A549 (cell line): ENCODE measurements at regions of chr9 and their contacts with region 1.

Region 1: GRCh38 chr9:112898872-112899311 is 8.2 kb upstream of the SLC46A2 start:
- DNase-seq: no peak
- ATAC-seq: no peak
- H3K4me3 ChIP-seq: no peak overlapping the region
- H3K27ac ChIP-seq: no peak overlapping the region
- H3K4me1 ChIP-seq: no peaks in the 10 kb centered on the region
- CTCF ChIP-seq: no peak
- EP300 ChIP-seq: no peak
- POLR2A ChIP-seq: no peak
- RAD21 ChIP-seq: no peak

Region 2: GRCh38 chr9:112844771-112845542 is 53.9 kb before region 1 on chr9:
- CTCF ChIA-PET with region 1: interaction called, 24 read pairs
- POLR2A ChIA-PET with region 1: no interaction called
- DNase-seq: peak; percentile 70 to 74
- ATAC-seq: peak; percentile 74 to 89
- H3K4me3 ChIP-seq: no peak overlapping the region
- H3K27ac ChIP-seq: no peak overlapping the region
- H3K4me1 ChIP-seq: no peaks in the 10 kb centered on the region
- CTCF ChIP-seq: peak; percentile 85
- EP300 ChIP-seq: no peak
- POLR2A ChIP-seq: no peak
- RAD21 ChIP-seq: peak; percentile 63 to 79

Region 3: DNA sequence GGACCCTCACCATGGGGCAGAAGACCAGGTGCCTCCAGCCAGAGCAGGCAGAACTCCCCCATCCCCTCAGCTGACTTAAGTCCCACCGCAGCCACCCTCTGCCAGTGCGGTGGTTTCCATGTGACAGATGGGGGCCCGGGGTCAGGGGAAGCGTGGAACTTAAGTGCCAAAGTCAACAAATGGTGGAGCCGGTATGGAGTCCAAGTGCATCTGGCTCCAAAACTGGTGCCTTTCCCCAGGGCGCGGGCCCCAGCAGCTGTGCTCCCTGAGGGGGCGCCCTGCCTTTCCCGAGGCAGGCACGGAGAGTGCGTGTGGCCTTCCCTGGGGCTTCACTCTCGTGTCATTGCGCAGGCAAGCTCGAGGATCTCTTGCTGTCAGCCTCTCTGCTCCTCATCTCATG is 42.1 kb before region 1 on chr9:
- CTCF ChIA-PET with region 1: interaction called, 11 read pairs
- POLR2A ChIA-PET with region 1: no interaction called
- DNase-seq: no peak
- ATAC-seq: no peak
- H3K4me3 ChIP-seq: no peak overlapping the region
- H3K27ac ChIP-seq: no peak overlapping the region
- H3K4me1 ChIP-seq: no peaks in the 10 kb centered on the region
- CTCF ChIP-seq: no peak
- EP300 ChIP-seq: no peak
- POLR2A ChIP-seq: no peak
- RAD21 ChIP-seq: no peak

Region 4: GRCh38 chr9:112913326-112913725 is 14.4 kb after region 1 on chr9:
- CTCF ChIA-PET with region 1: interaction called, 15 read pairs
- POLR2A ChIA-PET with region 1: no interaction called
- DNase-seq: no peak
- ATAC-seq: no peak
- H3K4me3 ChIP-seq: no peak overlapping the region
- H3K27ac ChIP-seq: no peak overlapping the region
- H3K4me1 ChIP-seq: no peaks in the 10 kb centered on the region
- CTCF ChIP-seq: no peak
- EP300 ChIP-seq: no peak
- POLR2A ChIP-seq: no peak
- RAD21 ChIP-seq: no peak

Region 5: DNA sequence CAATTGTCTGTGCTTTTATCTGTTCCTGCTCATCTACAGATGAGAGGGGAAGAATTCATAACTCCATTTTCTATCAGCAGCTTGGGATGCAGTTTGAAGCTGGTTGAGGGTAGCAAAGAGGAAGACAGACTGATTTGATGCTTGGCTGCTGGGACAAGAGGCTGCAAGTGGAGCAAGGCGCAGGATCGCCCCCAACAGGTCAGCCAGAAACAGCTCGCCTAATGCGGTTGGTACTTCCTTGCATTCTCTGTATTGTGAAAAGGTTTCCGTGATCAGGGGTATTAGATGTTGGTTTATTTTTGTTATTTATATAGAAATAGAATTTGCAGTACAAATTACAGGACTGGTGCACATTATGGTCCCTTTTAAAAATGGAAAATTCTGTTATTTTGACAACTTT is 72.5 kb after region 1 on chr9:
- CTCF ChIA-PET with region 1: no interaction called
- POLR2A ChIA-PET with region 1: no interaction called
- DNase-seq: peak in 1 of 2 experiments; percentile 25
- ATAC-seq: peak in 1 of 2 experiments; percentile 38; a peak in 1 of 6 replicates
- H3K4me3 ChIP-seq: no peak overlapping the region
- H3K27ac ChIP-seq: no peak overlapping the region
- H3K4me1 ChIP-seq: no peaks in the 10 kb centered on the region
- CTCF ChIP-seq: no peak
- EP300 ChIP-seq: no peak
- POLR2A ChIP-seq: no peak
- RAD21 ChIP-seq: peak in 1 of 2 experiments; percentile 37; a peak in 2 of 5 replicates